Naive thymus-derived CD4-positive, alpha-beta T cell (primary cell): ENCODE measurements at regions of chr16 and their contacts with region 1.

Region 1: GRCh38 chr16:25224731-25225319 is 8.1 kb downstream of the AQP8 start:
- DNase-seq: no peak
- ATAC-seq: no peak
- H3K4me3 ChIP-seq: no peak overlapping the region
- H3K4me3 Mint-ChIP-seq: no peak overlapping the region
- H3K27ac ChIP-seq: no peak overlapping the region
- H3K27ac Mint-ChIP-seq: no peak overlapping the region
- H3K4me1 ChIP-seq: no peaks in the 10 kb centered on the region
- H3K4me1 Mint-ChIP-seq: peaks cover 0 to 6% (median 0%) of the 10 kb centered on the region in 7 donors
- H3K27me3 ChIP-seq: no peaks in the 10 kb centered on the region
- H3K27me3 Mint-ChIP-seq: no peaks in the 10 kb centered on the region

Region 2: GRCh38 chr16:24516900-24517669 is 707.7 kb before region 1 on chr16:
- CTCF ChIA-PET with region 1: no interaction called
- POLR2A ChIA-PET with region 1: no interaction called
- intact Hi-C with region 1: loop called in 1 of 2 experiments (anchors 1 kb)
- DNase-seq: peak; percentile 46 to 75 (median 68)
- ATAC-seq: peak; percentile 91
- H3K4me3 ChIP-seq: no peak overlapping the region
- H3K4me3 Mint-ChIP-seq: peak overlapping the region in 8 of 10 donors; percentile 14 to 71 (median 44)
- H3K27ac ChIP-seq: no peak overlapping the region
- H3K27ac Mint-ChIP-seq: peak overlapping the region in 3 of 9 donors; percentile 1 to 88 (median 5)
- H3K4me1 ChIP-seq: no peaks in the 10 kb centered on the region
- H3K4me1 Mint-ChIP-seq: peaks cover 4 to 14% (median 6%) of the 10 kb centered on the region in 7 donors
- H3K27me3 ChIP-seq: no peaks in the 10 kb centered on the region
- H3K27me3 Mint-ChIP-seq: peaks cover 0 to 7% (median 0%) of the 10 kb centered on the region in 5 donors

Region 3: DNA sequence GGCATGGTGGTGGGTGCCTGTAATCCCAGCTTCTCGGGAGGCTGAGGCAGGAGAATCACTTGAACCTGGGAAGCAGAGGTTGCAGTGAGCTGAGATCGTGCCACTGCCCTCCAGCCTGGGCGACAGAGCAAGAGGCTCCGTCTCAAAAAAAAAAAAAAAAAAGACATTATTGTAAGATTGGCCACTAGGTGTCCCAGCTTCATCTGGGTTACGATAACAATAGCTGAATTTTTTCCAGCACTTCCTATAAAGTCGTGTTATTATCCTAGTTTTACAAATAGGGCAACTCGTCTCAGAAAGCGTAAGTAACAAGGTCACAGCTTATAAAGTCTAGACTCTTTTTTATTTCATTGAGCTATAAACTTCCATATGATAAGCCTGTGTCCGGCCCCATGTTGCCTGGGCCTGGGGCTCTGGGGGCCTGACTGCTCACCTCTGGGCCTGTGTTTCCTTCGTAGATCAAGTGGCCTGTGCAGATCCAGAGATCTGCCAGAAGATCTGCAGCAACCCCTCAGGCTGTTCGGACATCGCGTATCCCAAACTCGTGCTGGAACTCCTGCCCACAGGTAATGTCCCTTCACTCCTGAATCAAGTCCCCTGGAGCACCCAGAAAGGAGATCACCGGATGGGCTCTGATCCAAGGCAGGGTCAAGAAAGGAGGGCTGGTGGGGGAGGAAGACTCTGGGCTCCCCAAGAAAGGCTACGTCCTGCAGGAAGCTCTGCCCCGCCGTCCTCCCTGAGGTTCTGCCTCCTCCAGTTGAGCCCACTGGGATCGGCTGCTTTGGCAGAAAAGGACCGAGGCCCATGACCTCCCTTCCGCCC is 318.4 kb before region 1 on chr16:
- CTCF ChIA-PET with region 1: interaction called, 5 read pairs
- POLR2A ChIA-PET with region 1: no interaction called
- intact Hi-C with region 1: loop called in 1 of 2 experiments (anchors 10 kb)
- DNase-seq: no peak
- ATAC-seq: no peak
- H3K4me3 ChIP-seq: no peak overlapping the region
- H3K4me3 Mint-ChIP-seq: no peak overlapping the region
- H3K27ac ChIP-seq: no peak overlapping the region
- H3K27ac Mint-ChIP-seq: peak overlapping the region in 1 of 9 donors; percentile 51
- H3K4me1 ChIP-seq: no peaks in the 10 kb centered on the region
- H3K4me1 Mint-ChIP-seq: peaks cover 0 to 4% (median 0%) of the 10 kb centered on the region in 7 donors
- H3K27me3 ChIP-seq: no peaks in the 10 kb centered on the region
- H3K27me3 Mint-ChIP-seq: peaks cover 0 to 9% (median 0%) of the 10 kb centered on the region in 5 donors

Region 4: GRCh38 chr16:24988593-24989338 is 236.1 kb before region 1 on chr16:
- CTCF ChIA-PET with region 1: interaction called, 3 read pairs
- POLR2A ChIA-PET with region 1: no interaction called
- intact Hi-C with region 1: loop called in 1 of 2 experiments (anchors 10 kb)
- DNase-seq: no peak
- ATAC-seq: no peak
- H3K4me3 ChIP-seq: no peak overlapping the region
- H3K4me3 Mint-ChIP-seq: peak overlapping the region in 2 of 10 donors; percentile 29 to 31
- H3K27ac ChIP-seq: no peak overlapping the region
- H3K27ac Mint-ChIP-seq: peak overlapping the region in 7 of 9 donors; percentile 7 to 86 (median 44)
- H3K4me1 ChIP-seq: peaks cover 3 to 10% of the 10 kb centered on the region in 2 donors
- H3K4me1 Mint-ChIP-seq: peaks cover 49 to 93% (median 79%) of the 10 kb centered on the region in 7 donors
- H3K27me3 ChIP-seq: no peaks in the 10 kb centered on the region
- H3K27me3 Mint-ChIP-seq: no peaks in the 10 kb centered on the region

Region 5: DNA sequence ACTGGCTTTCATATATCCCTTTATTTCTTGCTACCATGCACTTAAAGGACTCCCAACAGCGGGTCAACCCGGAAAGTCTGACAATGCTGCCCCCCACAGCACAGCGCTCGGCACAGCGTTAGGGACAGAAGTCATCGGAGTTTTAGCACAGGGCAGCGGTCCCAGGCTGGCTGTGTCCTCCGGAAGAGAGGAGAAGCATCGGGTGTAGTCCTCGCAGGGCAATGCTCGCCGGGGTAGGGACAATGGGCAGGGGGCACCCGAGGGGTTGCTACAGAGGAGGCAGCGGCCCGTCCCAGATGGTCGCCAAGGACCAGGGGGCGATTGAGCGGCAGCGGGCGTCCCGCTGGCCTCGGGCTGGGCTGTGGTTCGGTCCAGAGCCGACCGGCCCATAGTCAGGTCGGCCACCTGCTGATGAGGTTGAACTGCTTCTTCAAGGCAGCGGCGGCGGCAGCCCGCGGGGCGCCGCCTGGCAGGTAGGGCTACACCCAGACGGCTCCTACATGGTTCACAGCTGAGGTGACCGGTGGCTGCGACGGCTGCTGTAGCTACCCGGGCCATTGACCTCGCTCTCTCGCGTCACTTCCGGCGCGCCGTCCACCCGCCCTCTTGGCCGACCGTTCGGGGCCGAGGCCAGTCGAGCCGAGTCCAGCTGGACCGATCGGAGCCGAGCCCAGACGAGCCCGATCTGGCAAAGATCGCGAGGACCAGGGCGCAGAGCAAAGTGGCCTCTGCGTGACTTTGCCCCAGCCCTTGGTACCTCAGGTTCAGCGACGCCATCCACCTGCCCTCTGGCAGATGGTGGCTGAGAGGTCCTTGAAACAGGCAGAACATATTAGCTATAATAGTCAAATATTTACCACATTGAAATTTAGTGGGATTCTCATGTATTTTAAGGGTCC is 118.0 kb before region 1 on chr16:
- CTCF ChIA-PET with region 1: no interaction called
- POLR2A ChIA-PET with region 1: no interaction called
- intact Hi-C with region 1: no loop called
- DNase-seq: peak; percentile 30 to 83 (median 49)
- ATAC-seq: peak; percentile 59
- H3K4me3 ChIP-seq: peak overlapping the region; percentile 69
- H3K4me3 Mint-ChIP-seq: peak overlapping the region; percentile 85 to 98 (median 96)
- H3K27ac ChIP-seq: peak overlapping the region; percentile 72
- H3K27ac Mint-ChIP-seq: peak overlapping the region; percentile 71 to 97 (median 92)
- H3K4me1 ChIP-seq: peaks cover 11 to 16% of the 10 kb centered on the region in 2 donors
- H3K4me1 Mint-ChIP-seq: peaks cover 25 to 45% (median 38%) of the 10 kb centered on the region in 7 donors
- H3K27me3 ChIP-seq: no peaks in the 10 kb centered on the region
- H3K27me3 Mint-ChIP-seq: no peaks in the 10 kb centered on the region

Region 6: GRCh38 chr16:25126820-25127232 is 98.0 kb before region 1 on chr16:
- CTCF ChIA-PET with region 1: interaction called, 11 read pairs
- POLR2A ChIA-PET with region 1: no interaction called
- intact Hi-C with region 1: loop called (anchors 1 kb)
- DNase-seq: peak in 6 of 9 donors; percentile 13 to 55 (median 34)
- ATAC-seq: peak; percentile 75
- H3K4me3 ChIP-seq: no peak overlapping the region
- H3K4me3 Mint-ChIP-seq: peak overlapping the region in 3 of 10 donors; percentile 34 to 62 (median 57)
- H3K27ac ChIP-seq: no peak overlapping the region
- H3K27ac Mint-ChIP-seq: peak overlapping the region; percentile 2 to 77 (median 44)
- H3K4me1 ChIP-seq: no peaks in the 10 kb centered on the region
- H3K4me1 Mint-ChIP-seq: peaks cover 14 to 50% (median 43%) of the 10 kb centered on the region in 7 donors
- H3K27me3 ChIP-seq: no peaks in the 10 kb centered on the region
- H3K27me3 Mint-ChIP-seq: no peaks in the 10 kb centered on the region